T-cell (primary cell): ENCODE measurements at regions of chr6 and their contacts with region 1.

Region 1: GRCh38 chr6:30489081-30490025 is at the start of gene HLA-E:
- DNase-seq: peak; percentile 69 to 99 (median 90)
- ATAC-seq: peak; percentile 78 to 84 (median 84)
- H3K4me3 ChIP-seq: peak within 1 kb of the TSS; percentile 82 to 93
- H3K4me3 Mint-ChIP-seq: peak within 1 kb of the TSS; percentile 98 to 99 (median 99)
- H3K27ac ChIP-seq: peak within 1 kb of the TSS; percentile 89
- H3K27ac Mint-ChIP-seq: peak within 1 kb of the TSS; percentile 98 to 99
- H3K4me1 ChIP-seq: peaks cover 34 to 54% of the 10 kb centered on the region in 2 experiments
- H3K4me1 Mint-ChIP-seq: peaks cover 40 to 59% (median 56%) of the 10 kb centered on the region in 3 donors
- H3K27me3 ChIP-seq: peaks cover 0 to 3% of the 10 kb centered on the region in 2 experiments
- H3K27me3 Mint-ChIP-seq: no peaks in the 10 kb centered on the region
- total RNA-seq, gene HLA-E: 1,114 to 1,417 (median 1,253) TPM

Region 2: GRCh38 chr6:30515932-30516753 is 26.8 kb after region 1 on chr6:
- CTCF ChIA-PET with region 1: interaction called in 1 of 2 experiments, 13 read pairs
- POLR2A ChIA-PET with region 1: interaction called, 4 to 7 read pairs
- DNase-seq: peak; percentile 73 to 97 (median 90)
- ATAC-seq: peak; percentile 86 to 89 (median 88)
- H3K4me3 ChIP-seq: peak overlapping the region; percentile 45 to 62
- H3K4me3 Mint-ChIP-seq: peak overlapping the region; percentile 84 to 89 (median 85)
- H3K27ac ChIP-seq: peak overlapping the region; percentile 93
- H3K27ac Mint-ChIP-seq: peak overlapping the region; percentile 98 to 99
- H3K4me1 ChIP-seq: peaks cover 37 to 84% of the 10 kb centered on the region in 2 experiments
- H3K4me1 Mint-ChIP-seq: peaks cover 63 to 73% (median 68%) of the 10 kb centered on the region in 3 donors
- H3K27me3 ChIP-seq: no peaks in the 10 kb centered on the region
- H3K27me3 Mint-ChIP-seq: no peaks in the 10 kb centered on the region